ENCODE measurements at regions of chr11 and their contacts with region 1.

Region 1: DNA sequence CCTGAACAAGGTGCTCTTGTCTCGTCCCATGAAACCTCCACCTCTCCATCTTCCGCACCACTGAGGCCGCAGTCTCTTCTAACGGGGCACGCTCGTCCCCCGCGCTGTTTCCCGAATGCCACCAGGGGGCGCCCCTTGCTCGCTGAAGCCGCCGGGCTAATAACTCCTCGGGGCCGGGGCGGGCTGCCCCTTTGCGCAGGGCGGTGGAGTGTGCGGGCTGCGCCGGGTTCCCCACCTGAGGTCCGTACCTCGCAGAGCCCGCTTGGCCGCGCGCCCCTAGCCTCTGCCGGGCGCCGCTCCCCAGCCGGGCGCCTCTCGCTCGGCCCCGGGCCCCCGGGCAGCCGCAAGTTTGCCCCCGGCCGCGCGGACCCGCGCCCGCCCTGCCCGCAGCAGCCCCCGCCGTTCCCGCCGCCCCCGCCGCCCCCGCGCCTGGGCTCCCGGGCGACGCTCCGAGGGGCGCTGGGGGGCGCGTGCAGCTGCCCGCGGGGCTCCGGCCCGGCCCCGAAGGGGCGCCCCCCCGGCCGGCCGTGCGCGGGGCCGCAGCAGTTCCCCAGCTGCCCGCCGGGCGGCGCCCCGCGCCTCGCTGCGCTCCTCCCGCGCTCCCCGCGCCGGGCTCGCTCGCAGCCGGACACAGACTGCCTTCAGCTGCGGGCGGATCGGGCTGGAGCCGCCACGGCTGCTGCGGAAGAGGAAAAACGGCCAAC is at the start of gene GRIK4:
- DNase-seq: no peak
- H3K4me3 ChIP-seq: peak within 1 kb of the TSS; percentile 29
- H3K27me3 ChIP-seq: peaks cover 7% of the 10 kb centered on the region; the same call in 1 of the 2 replicates
- CTCF ChIP-seq: peak; percentile 95
- polyA plus RNA-seq, gene GRIK4: not detected in 2 replicates

Region 2: GRCh38 chr11:120335908-120336640 is 175.2 kb before region 1 on chr11 and contains the start of gene ARHGEF12:
- CTCF ChIA-PET with region 1: interaction called, 15 read pairs
- POLR2A ChIA-PET with region 1: no interaction called
- DNase-seq: peak; percentile 66
- H3K4me3 ChIP-seq: peak within 1 kb of the TSS; percentile 71
- H3K27me3 ChIP-seq: no peaks in the 10 kb centered on the region
- CTCF ChIP-seq: peak; percentile 53
- polyA plus RNA-seq, gene ARHGEF12: 16.9 and 31.4 TPM in 2 replicates

Region 3: GRCh38 chr11:120500414-120501071 is 10.7 kb before region 1 on chr11:
- CTCF ChIA-PET with region 1: interaction called, 29 read pairs
- POLR2A ChIA-PET with region 1: interaction called, 9 read pairs
- DNase-seq: peak; percentile 19
- H3K4me3 ChIP-seq: no peak overlapping the region
- H3K27me3 ChIP-seq: no peaks in the 10 kb centered on the region
- CTCF ChIP-seq: no peak

Region 4: GRCh38 chr11:120527111-120527761 is 16.0 kb after region 1 on chr11:
- CTCF ChIA-PET with region 1: interaction called, 13 read pairs
- POLR2A ChIA-PET with region 1: no interaction called
- DNase-seq: no peak
- H3K4me3 ChIP-seq: no peak overlapping the region
- H3K27me3 ChIP-seq: peaks cover 9% of the 10 kb centered on the region
- CTCF ChIP-seq: no peak

Region 5: DNA sequence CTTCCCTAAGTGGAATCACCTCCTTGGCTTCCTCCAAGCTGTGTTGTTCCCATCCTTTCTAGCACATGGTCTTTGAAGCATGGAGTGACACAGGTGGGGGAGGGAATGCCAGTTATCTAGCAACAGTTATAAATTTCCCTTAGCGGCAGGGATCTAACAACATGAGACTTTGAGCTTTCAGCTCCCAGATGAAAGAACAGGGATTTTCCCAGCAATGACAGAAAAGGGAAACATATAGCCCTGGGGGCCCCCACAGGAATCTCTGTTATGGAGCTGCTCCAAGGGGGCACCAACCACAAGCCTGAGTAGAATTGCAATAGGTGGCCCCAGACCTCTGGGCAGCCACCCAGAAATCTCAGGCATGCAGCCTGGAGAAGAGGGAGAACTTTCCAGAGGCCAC is 163.3 kb after region 1 on chr11:
- CTCF ChIA-PET with region 1: interaction called, 162 read pairs
- POLR2A ChIA-PET with region 1: no interaction called
- DNase-seq: no peak
- H3K4me3 ChIP-seq: no peak overlapping the region
- H3K27me3 ChIP-seq: peaks cover 3% of the 10 kb centered on the region; the same call in 1 of the 2 replicates
- CTCF ChIP-seq: no peak

Region 6: GRCh38 chr11:120682866-120683265 is 171.6 kb after region 1 on chr11:
- CTCF ChIA-PET with region 1: interaction called, 162 read pairs
- POLR2A ChIA-PET with region 1: no interaction called
- DNase-seq: no peak
- H3K4me3 ChIP-seq: no peak overlapping the region
- H3K27me3 ChIP-seq: peaks cover 7% of the 10 kb centered on the region
- CTCF ChIP-seq: no peak

Region 7: DNA sequence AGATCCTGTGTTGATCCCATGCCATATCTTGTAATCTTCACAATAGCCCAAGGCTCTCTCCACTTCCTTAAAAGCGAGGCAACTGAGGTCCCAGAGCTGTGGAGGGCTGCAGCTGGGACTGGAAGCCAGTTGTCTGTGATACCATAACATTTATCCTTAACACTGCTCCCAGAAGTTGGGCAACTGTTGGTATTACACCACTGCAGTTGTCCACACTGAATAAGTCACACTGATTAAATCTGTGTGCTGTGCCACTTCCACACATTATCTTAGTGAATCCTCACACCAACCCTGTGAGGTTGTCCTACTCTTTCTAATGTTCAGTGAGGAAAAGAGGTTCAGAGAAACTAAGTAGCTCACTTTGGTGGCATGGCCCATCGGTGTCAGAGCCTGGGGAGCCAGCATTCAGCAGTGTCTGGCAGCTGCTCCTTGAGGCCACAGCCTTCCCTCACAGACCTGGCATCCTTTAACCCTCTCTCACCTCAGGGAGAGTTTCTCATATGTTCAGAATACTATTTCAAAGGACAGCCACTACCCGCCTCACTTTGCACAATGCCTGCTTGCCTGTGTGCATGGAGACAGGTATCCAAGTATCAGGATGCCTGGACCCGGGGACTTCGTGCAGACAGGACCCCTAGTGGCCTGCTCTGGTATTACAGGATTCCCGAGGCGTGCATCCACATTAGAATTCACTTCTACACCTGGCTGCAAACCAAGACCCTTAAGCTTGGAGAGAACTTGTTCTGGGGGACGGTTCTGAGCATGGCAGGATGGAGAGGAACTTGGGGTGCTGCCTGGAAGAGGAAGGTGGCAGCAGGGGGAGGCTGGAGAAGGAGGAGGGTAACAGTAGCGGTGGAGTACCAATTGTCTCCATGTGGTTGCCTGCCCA is 290.8 kb after region 1 on chr11:
- CTCF ChIA-PET with region 1: interaction called, 33 read pairs
- POLR2A ChIA-PET with region 1: no interaction called
- DNase-seq: no peak
- H3K4me3 ChIP-seq: no peak overlapping the region
- H3K27me3 ChIP-seq: no peaks in the 10 kb centered on the region; the same call in 1 of the 2 replicates
- CTCF ChIP-seq: peak; percentile 96